ENCODE measurements at regions of chr1 and their contacts with region 1.

Region 1: GRCh38 chr1:50368179-50369012 is 54.8 kb downstream of the DMRTA2 start:
- DNase-seq: no peak
- ATAC-seq: peak; percentile 86
- H3K4me3 ChIP-seq: no peak overlapping the region
- H3K27ac ChIP-seq: no peak overlapping the region
- H3K4me1 ChIP-seq: no peaks in the 10 kb centered on the region
- H3K27me3 ChIP-seq: no peaks in the 10 kb centered on the region
- CTCF ChIP-seq: peak; percentile 59 to 75 (median 70)
- EP300 ChIP-seq: no peak
- POLR2A ChIP-seq: no peak
- RAD21 ChIP-seq: peak; percentile 91

Region 2: GRCh38 chr1:50605186-50605875 is 236.9 kb after region 1 on chr1:
- CTCF ChIA-PET with region 1: interaction called, 151 read pairs
- POLR2A ChIA-PET with region 1: no interaction called
- RAD21 ChIA-PET with region 1: interaction called, 19 read pairs
- SMC1A ChIA-PET with region 1: interaction called, 28 read pairs
- in situ Hi-C with region 1: loop called (anchors 5 kb)
- intact Hi-C with region 1: loop called (anchors 1 kb)
- DNase-seq: no peak
- ATAC-seq: peak; percentile 88
- H3K4me3 ChIP-seq: no peak overlapping the region
- H3K27ac ChIP-seq: no peak overlapping the region
- H3K4me1 ChIP-seq: no peaks in the 10 kb centered on the region
- H3K27me3 ChIP-seq: no peaks in the 10 kb centered on the region
- CTCF ChIP-seq: peak; percentile 45 to 58 (median 50); a peak in 5 of 6 replicates
- EP300 ChIP-seq: no peak
- POLR2A ChIP-seq: no peak
- RAD21 ChIP-seq: peak; percentile 71

Region 3: DNA sequence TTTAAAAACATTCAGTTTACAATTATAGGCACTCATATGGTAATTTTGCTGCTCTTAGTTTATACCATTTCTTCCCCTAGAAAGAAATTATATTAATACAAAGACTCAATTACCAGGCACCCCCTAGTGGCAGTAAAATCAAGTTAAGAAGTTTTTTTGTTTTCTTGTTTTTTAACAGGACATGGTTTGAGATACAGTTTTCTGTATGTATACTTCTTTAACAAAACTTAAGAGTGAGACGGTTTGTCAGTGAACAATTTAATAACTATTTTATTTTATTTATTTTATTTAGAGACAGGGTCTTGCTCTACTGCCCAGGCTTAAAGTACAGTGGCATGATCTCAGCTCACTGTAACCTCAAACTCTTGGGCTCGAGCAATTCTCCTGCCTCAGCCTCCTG is 367.0 kb after region 1 on chr1:
- CTCF ChIA-PET with region 1: interaction called, 12 read pairs
- POLR2A ChIA-PET with region 1: no interaction called
- RAD21 ChIA-PET with region 1: no interaction called
- SMC1A ChIA-PET with region 1: interaction called, 4 read pairs
- in situ Hi-C with region 1: no loop called
- intact Hi-C with region 1: loop called (anchors 1 kb)
- DNase-seq: no peak
- ATAC-seq: no peak; the same call in 2 of the 3 replicates
- H3K4me3 ChIP-seq: no peak overlapping the region
- H3K27ac ChIP-seq: no peak overlapping the region
- H3K4me1 ChIP-seq: no peaks in the 10 kb centered on the region
- H3K27me3 ChIP-seq: no peaks in the 10 kb centered on the region
- CTCF ChIP-seq: peak in 2 of 3 experiments; percentile 28 to 38; a peak in 2 of 6 replicates
- EP300 ChIP-seq: no peak
- POLR2A ChIP-seq: no peak
- RAD21 ChIP-seq: 0 out of 2 replicates have a peak, but pooled peaks have one; percentile 32

Region 4: DNA sequence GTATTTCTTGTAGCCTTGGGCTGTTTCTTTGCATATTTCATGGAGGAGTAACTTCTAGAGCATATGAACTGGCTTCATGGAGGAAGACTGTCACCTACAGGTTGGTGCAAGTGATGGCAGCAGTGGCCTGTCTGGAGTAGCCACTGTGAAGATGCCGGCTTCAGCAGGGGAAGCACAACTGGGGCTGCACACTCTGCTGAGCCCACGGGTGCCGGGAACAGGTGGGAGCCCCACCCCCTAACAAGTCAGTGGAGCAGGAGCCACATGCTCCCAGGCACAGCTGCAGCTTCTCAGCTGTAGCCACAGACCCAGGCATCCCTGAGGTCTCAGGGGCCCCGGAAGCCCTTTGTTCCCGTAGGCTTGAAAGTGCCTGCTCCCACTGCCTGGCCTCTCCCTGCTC is 690.5 kb after region 1 on chr1:
- CTCF ChIA-PET with region 1: no interaction called
- POLR2A ChIA-PET with region 1: no interaction called
- RAD21 ChIA-PET with region 1: no interaction called
- SMC1A ChIA-PET with region 1: no interaction called
- in situ Hi-C with region 1: loop called (anchors 25 kb)
- intact Hi-C with region 1: loop called (anchors 10 kb)
- DNase-seq: peak; percentile 12
- ATAC-seq: peak; percentile 73
- H3K4me3 ChIP-seq: no peak overlapping the region
- H3K27ac ChIP-seq: no peak overlapping the region
- H3K4me1 ChIP-seq: no peaks in the 10 kb centered on the region
- H3K27me3 ChIP-seq: no peaks in the 10 kb centered on the region
- CTCF ChIP-seq: peak; percentile 47 to 68 (median 61)
- EP300 ChIP-seq: no peak
- POLR2A ChIP-seq: no peak
- RAD21 ChIP-seq: peak; percentile 67

Measured in GM12878 (cell line).